Activated CD4-positive, alpha-beta T cell treated with anti-CD3 and anti-CD28 coated beads for 36 hours (primary cell): ENCODE measurements at regions of chr21 and their contacts with region 1.

Region 1: DNA sequence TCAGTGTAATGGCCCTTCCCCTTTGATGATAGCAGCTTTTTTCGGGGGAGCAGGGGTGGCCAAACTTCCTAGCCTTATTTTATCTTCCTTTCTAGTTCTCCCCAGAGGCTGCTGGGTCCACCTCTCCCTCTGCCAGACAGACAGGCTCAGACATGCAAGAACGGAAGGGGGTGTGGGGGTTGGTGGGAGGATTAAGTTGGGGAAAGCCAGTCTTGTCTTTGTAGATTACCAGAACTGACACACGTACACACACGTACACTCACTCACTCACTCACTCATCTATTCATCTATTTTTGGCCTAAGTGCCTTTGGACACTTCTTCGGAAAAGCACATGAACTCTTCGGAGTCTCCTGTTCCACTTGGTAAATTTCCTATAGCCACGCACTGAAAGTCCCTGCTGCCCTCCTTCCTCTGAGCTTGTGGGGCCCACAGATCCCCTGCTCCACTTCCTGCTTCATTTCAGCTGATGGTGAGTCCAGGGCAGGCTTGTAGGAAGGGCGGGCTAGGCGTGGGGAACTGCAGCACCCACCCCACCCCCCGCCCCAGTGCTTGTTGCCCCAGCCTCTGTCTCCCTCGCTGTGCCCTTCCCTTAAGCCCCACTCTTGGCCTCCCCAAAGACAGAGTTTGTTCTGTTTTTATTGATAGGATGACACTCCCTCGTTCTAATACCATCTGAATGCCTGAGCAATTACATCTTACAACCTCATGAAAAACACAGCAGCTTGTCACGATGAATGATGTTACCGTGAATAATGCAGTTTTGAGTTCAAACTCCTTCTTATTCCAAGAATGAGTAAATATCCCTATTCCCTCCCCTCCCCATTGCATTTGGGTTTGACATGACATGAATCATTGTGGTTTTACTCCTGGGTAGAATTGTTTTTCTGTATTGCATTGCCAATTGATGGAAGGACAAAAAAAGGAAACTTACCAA is 60.7 kb upstream of the ATP5PO start:
- DNase-seq: peak; percentile 80
- ATAC-seq: peak; percentile 57
- H3K4me3 Mint-ChIP-seq: peak overlapping the region; percentile 68
- H3K27ac Mint-ChIP-seq: peak overlapping the region; percentile 96
- H3K4me1 Mint-ChIP-seq: peaks cover 73% of the 10 kb centered on the region
- H3K27me3 Mint-ChIP-seq: no peaks in the 10 kb centered on the region

Region 2: GRCh38 chr21:33751120-33751519 is 225.2 kb before region 1 on chr21:
- CTCF ChIA-PET with region 1: no interaction called
- POLR2A ChIA-PET with region 1: no interaction called
- intact Hi-C with region 1: no loop called
- DNase-seq: no peak
- ATAC-seq: no peak
- H3K4me3 Mint-ChIP-seq: no peak overlapping the region
- H3K27ac Mint-ChIP-seq: no peak overlapping the region
- H3K4me1 Mint-ChIP-seq: no peaks in the 10 kb centered on the region
- H3K27me3 Mint-ChIP-seq: no peaks in the 10 kb centered on the region

Region 3: GRCh38 chr21:33931799-33932390 is 44.5 kb before region 1 on chr21:
- CTCF ChIA-PET with region 1: interaction called, 8 read pairs
- POLR2A ChIA-PET with region 1: interaction called, 5 read pairs
- intact Hi-C with region 1: loop called (anchors 1 to 2 kb)
- DNase-seq: peak; percentile 38
- ATAC-seq: peak; percentile 13
- H3K4me3 Mint-ChIP-seq: peak overlapping the region; percentile 92
- H3K27ac Mint-ChIP-seq: peak overlapping the region; percentile 99
- H3K4me1 Mint-ChIP-seq: peaks cover 40% of the 10 kb centered on the region
- H3K27me3 Mint-ChIP-seq: no peaks in the 10 kb centered on the region

Region 4: GRCh38 chr21:34008618-34009017 is 32.3 kb after region 1 on chr21:
- CTCF ChIA-PET with region 1: interaction called, 3 read pairs
- POLR2A ChIA-PET with region 1: interaction called, 14 read pairs
- intact Hi-C with region 1: loop called (anchors 1 kb)
- DNase-seq: peak; percentile 89
- ATAC-seq: peak; percentile 96
- H3K4me3 Mint-ChIP-seq: no peak overlapping the region
- H3K27ac Mint-ChIP-seq: peak overlapping the region; percentile 44
- H3K4me1 Mint-ChIP-seq: peaks cover 21% of the 10 kb centered on the region
- H3K27me3 Mint-ChIP-seq: no peaks in the 10 kb centered on the region

Region 5: DNA sequence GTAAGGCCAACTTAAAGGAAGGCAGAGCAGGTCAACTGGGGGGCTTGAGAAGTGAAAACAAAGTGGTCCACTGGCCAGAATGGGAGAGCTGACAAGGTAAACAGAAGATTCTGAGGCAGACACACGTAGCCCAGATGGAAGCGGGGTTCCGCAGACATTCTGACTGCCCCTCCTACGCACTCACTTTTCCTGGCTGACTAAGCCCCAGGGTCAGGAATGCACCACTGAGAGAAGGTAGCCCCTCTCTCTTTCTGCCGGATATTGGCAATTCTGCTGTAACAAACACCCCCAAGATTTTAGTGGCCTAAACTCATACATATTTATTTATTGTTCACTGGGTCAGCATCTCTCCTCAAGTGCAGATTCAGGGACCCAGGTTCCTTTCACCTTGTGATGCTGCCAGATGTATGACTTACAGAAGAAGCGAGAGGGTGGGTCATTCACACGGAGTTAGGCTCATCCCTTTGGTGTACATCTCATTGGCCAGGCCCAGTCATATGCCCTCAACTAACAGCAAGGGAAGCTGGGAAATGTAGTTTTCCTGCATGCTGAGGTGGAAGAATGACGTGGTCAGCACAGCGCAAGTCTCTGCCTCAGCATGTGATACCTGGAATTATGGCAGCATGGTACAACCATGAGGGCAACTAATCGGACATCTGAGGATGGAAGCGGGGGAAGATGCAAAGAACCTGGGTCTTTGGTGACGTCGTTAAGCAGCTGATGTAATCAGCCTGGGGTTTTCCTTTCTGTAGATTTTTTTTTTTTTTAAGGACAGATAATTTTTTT is 53.6 kb after region 1 on chr21:
- CTCF ChIA-PET with region 1: no interaction called
- POLR2A ChIA-PET with region 1: no interaction called
- intact Hi-C with region 1: loop called in 1 of 2 experiments (anchors 2 kb)
- DNase-seq: peak; percentile 76
- ATAC-seq: peak; percentile 97
- H3K4me3 Mint-ChIP-seq: peak overlapping the region; percentile 1
- H3K27ac Mint-ChIP-seq: peak overlapping the region; percentile 89
- H3K4me1 Mint-ChIP-seq: peaks cover 35% of the 10 kb centered on the region
- H3K27me3 Mint-ChIP-seq: no peaks in the 10 kb centered on the region

Region 6: DNA sequence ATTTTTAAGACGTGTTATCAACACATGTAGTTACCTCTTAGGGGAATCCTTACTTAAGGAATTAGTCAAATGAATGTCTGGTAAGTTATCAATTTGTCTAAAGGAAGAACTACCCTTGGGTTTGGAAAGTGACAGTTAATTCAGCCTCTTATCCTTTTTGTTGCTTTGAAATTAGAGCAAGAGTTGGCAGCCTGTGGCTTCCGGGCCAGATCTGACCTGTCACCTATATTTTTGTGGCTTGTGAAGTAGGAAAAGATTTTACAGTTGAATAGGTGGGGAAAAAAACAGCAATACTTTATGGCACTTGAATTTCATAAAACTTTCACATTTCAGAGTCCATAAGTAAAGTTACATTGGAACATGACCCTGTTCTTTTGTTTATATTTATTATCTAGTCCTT is 102.6 kb after region 1 on chr21:
- CTCF ChIA-PET with region 1: interaction called, 6 read pairs
- POLR2A ChIA-PET with region 1: interaction called, 6 read pairs
- intact Hi-C with region 1: loop called in 1 of 2 experiments (anchors 2 kb)
- DNase-seq: peak; percentile 46
- ATAC-seq: no peak
- H3K4me3 Mint-ChIP-seq: peak overlapping the region; percentile 13
- H3K27ac Mint-ChIP-seq: peak overlapping the region; percentile 71
- H3K4me1 Mint-ChIP-seq: peaks cover 89% of the 10 kb centered on the region
- H3K27me3 Mint-ChIP-seq: no peaks in the 10 kb centered on the region

Region 7: GRCh38 chr21:34526618-34527290 is 550.4 kb after region 1 on chr21:
- CTCF ChIA-PET with region 1: no interaction called
- POLR2A ChIA-PET with region 1: no interaction called
- intact Hi-C with region 1: loop called in 1 of 2 experiments (anchors 2 kb)
- DNase-seq: peak; percentile 71
- ATAC-seq: peak; percentile 85
- H3K4me3 Mint-ChIP-seq: peak overlapping the region; percentile 55
- H3K27ac Mint-ChIP-seq: peak overlapping the region; percentile 85
- H3K4me1 Mint-ChIP-seq: peaks cover 35% of the 10 kb centered on the region
- H3K27me3 Mint-ChIP-seq: peaks cover 2% of the 10 kb centered on the region